HepG2 (cell line): ENCODE measurements at regions of chr7 and their contacts with region 1.

Region 1: GRCh38 chr7:25389489-25390106 is 161.3 kb upstream of the NPVF start:
- DNase-seq: peak; percentile 13
- ATAC-seq: no peak
- H3K4me3 ChIP-seq: no peak overlapping the region
- H3K27ac ChIP-seq: no peak overlapping the region
- H3K4me1 ChIP-seq: no peaks in the 10 kb centered on the region
- H3K27me3 ChIP-seq: peaks cover 0 to 2% of the 10 kb centered on the region in 2 experiments; a peak in 2 of 5 replicates
- CTCF ChIP-seq: no peak; the same call in 1 of the 2 replicates
- EP300 ChIP-seq: no peak
- POLR2A ChIP-seq: no peak
- RAD21 ChIP-seq: no peak

Region 2: DNA sequence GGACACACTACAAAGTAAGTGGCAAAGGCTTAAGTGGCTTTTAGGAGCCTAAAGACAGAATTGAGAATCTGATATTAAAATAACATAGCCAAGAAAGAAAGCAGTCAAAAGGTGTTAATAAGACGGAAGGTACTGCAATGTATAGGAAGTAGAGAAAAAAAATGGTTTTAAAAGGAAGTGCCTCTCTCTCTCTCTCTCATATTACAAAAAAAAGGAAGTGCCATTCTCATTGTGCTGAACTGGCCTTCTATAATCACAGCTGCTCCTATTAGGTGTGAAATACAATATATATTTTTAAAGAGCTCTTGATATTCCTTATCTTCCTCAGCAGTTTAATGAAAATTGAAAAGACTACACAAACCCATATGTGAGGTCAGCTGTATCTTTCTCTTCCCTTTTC is 38.1 kb after region 1 on chr7:
- CTCF ChIA-PET with region 1: no interaction called
- POLR2A ChIA-PET with region 1: no interaction called
- in situ Hi-C with region 1: no loop called
- intact Hi-C with region 1: no loop called
- DNase-seq: no peak
- ATAC-seq: no peak
- H3K4me3 ChIP-seq: no peak overlapping the region
- H3K27ac ChIP-seq: no peak overlapping the region
- H3K4me1 ChIP-seq: peaks cover 12% of the 10 kb centered on the region
- H3K27me3 ChIP-seq: 0 out of 5 replicates have a peak, but pooled peaks cover 0 to 2% of the 10 kb centered on the region in 2 experiments
- CTCF ChIP-seq: no peak
- EP300 ChIP-seq: no peak
- POLR2A ChIP-seq: no peak
- RAD21 ChIP-seq: no peak

Region 3: DNA sequence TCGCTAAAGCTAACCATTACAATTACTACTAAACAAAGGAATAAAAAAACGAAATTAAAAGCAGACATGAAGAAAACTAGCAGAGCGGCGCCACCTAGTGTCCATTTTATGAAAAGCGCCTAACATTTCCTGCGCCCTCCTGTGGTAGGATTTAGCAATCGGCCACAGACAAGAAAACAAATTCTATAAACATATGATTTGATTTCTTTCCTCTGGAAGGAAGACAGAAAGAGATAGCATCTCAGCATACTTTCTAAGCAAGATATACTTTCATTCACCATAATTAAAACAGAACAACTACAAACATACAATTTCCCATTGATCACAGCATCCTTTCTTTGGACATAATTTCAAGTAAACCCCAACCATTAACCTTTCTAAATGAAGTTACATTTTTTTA is 176.4 kb after region 1 on chr7:
- CTCF ChIA-PET with region 1: interaction called, 22 read pairs
- POLR2A ChIA-PET with region 1: no interaction called
- in situ Hi-C with region 1: loop called (anchors 10 kb)
- intact Hi-C with region 1: loop called (anchors 1 kb)
- DNase-seq: peak; percentile 50
- ATAC-seq: no peak
- H3K4me3 ChIP-seq: no peak overlapping the region
- H3K27ac ChIP-seq: no peak overlapping the region
- H3K4me1 ChIP-seq: peaks cover 9% of the 10 kb centered on the region
- H3K27me3 ChIP-seq: peaks cover 2 to 11% of the 10 kb centered on the region in 2 experiments; a peak in 3 of 5 replicates
- CTCF ChIP-seq: peak; percentile 90
- EP300 ChIP-seq: no peak
- POLR2A ChIP-seq: no peak
- RAD21 ChIP-seq: peak; percentile 74

Region 4: GRCh38 chr7:25578991-25579777 is 189.6 kb after region 1 on chr7:
- CTCF ChIA-PET with region 1: no interaction called
- POLR2A ChIA-PET with region 1: no interaction called
- in situ Hi-C with region 1: loop called (anchors 10 kb)
- intact Hi-C with region 1: no loop called
- DNase-seq: no peak
- ATAC-seq: no peak
- H3K4me3 ChIP-seq: no peak overlapping the region
- H3K27ac ChIP-seq: no peak overlapping the region
- H3K4me1 ChIP-seq: no peaks in the 10 kb centered on the region
- H3K27me3 ChIP-seq: no peaks in the 10 kb centered on the region
- CTCF ChIP-seq: no peak
- EP300 ChIP-seq: no peak
- POLR2A ChIP-seq: no peak
- RAD21 ChIP-seq: no peak